GM10248 (cell line): ENCODE measurements at regions of chr11 and their contacts with region 1.

Region 1: GRCh38 chr11:65711785-65712632 is at the start of gene KAT5:
- DNase-seq: peak; percentile 92
- CTCF ChIP-seq: peak; percentile 96

Region 2: DNA sequence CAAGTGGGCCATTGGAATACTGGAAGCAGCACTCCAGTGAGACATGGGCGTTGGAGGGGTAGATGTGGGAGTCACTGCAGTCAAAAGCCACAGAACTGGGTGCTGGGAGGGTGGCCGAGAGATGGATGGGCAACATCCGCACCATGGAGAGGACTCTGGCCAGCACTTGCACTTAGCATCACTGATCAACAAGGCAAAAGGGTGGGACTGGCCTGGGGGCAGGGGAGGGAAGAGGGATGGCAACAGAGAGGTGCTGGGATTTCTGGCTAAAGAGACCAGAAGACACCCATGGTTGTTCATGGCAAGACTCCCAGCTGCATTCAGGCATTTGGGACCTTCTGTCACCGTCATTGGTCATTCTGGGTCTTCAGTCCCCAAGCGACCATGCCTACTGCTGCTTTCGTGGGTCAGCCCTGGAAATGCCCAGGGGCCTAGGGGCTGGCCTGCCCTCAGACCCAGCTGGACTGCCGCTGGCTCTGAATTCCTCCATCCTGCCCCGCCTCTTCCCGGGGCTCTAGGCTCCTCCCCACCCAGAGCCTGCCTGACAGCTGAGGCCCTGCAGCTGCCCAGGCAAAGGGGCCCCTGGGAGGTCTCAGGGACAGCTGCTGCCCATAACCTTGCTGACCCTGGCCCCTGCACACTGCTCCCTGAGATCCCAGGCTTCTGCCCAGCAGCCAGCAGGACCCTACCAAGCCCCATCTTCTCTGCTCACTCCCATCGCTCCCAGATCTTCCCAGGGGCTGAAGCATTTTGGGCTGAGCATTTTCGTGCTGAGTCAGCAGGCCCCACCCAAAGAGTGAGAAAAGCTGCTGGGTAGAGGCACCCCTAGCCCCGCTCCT is 410.3 kb before region 1 on chr11:
- CTCF ChIA-PET with region 1: no interaction called
- POLR2A ChIA-PET with region 1: no interaction called
- DNase-seq: no peak
- CTCF ChIP-seq: no peak

Region 3: GRCh38 chr11:65448418-65449105 is 263.4 kb before region 1 on chr11:
- CTCF ChIA-PET with region 1: no interaction called
- POLR2A ChIA-PET with region 1: no interaction called
- DNase-seq: no peak
- CTCF ChIP-seq: no peak

Region 4: GRCh38 chr11:65726660-65727059 is 14.7 kb after region 1 on chr11:
- CTCF ChIA-PET with region 1: interaction called, 33 read pairs
- POLR2A ChIA-PET with region 1: interaction called, 18 read pairs
- DNase-seq: no peak
- CTCF ChIP-seq: peak; percentile 5

Region 5: DNA sequence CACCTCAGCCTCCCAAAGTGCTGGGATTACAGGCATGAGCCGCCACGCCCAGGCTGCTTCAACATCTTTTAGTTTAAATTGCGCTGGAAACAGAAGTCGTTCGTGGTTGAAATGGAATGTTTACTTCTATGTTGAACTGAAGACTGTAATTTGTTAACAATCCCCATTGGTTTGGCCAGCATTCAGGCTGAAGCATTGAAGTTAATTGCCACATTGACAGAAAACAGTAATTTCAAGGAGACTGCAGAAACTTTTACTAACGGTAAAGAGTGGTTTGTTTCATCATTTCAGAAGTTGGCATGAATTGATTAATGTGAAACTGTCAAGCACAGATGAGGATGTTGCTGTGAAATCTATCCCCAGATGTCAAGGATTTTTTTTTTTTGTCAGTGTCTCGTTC is 54.5 kb after region 1 on chr11:
- CTCF ChIA-PET with region 1: interaction called, 13 read pairs
- POLR2A ChIA-PET with region 1: no interaction called
- DNase-seq: no peak
- CTCF ChIP-seq: no peak

Region 6: GRCh38 chr11:65833297-65834030 is 121.5 kb after region 1 on chr11 and contains the start of gene SNX32:
- CTCF ChIA-PET with region 1: interaction called, 16 read pairs
- POLR2A ChIA-PET with region 1: no interaction called
- DNase-seq: peak; percentile 100
- CTCF ChIP-seq: no peak

Region 7: DNA sequence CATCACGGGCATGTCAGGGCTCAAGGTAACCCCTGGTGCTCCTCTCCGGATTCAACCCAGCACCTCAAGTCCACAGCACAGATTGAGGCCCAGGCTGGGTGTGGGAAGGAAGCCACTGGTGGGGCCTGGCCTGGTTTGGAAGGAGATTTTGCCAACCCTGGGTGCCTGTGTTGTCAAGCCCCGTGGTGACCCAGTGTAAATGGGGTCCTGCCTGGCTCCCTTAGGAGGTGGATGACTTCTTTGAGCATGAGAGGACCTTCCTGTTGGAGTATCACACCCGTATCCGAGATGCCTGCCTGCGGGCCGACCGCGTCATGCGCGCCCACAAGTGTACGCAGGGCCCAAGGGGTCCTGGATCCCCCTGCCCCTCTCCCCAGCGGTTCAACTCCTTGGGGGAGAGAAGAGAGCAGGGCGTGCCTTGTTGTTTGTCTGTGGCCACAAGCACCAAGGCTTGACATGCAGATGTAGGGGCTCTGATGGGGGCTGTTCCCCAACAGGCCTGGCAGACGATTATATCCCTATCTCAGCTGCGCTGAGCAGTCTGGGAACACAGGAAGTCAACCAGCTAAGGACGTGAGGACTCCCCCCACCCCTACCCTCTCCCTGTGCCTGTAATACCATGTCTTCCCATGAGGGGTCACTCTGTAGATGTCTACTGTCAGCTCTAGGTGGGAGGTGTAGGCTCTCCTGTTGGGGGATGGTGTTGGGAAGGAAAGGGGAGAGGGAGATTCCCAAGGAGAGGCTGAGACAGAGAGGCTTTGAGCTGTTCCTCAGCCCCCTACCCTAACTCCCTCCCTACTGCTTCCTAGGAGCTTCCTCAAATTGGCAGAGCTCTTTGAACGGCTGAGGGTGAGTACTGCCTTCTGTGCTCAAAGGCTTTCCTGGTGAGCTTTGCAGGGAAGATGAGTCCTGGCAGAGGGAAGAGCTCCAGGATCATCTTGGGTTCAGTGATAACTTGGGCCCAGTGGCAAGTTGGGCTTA is 139.1 kb after region 1 on chr11:
- CTCF ChIA-PET with region 1: interaction called, 11 read pairs
- POLR2A ChIA-PET with region 1: interaction called, 4 read pairs
- DNase-seq: no peak
- CTCF ChIP-seq: no peak

Region 8: DNA sequence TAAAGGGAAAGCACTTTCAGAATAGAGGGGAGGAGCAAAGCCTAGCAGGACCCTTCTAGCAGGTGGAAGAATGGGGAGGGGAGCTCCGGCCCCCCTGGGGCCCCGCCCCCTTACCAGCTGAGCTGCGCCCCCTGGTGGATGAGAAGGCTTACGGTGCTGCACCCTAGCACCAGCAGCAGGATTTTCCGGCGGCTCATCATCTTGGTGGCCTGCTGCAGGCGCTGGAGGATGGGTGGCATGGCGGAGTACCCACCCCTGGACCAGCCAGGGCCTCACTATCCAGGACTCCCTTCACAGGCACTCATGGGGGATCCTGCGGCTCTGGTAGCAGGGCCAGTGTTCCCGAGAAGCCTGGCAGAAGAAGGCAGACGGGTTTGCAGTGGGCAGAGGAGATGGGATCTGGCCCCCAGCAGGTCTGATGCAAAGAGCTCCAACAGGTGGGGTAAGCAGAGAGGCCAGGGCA is 333.2 kb after region 1 on chr11:
- CTCF ChIA-PET with region 1: interaction called, 11 read pairs
- POLR2A ChIA-PET with region 1: no interaction called
- DNase-seq: peak; percentile 91
- CTCF ChIP-seq: peak; percentile 92